Posterior cingulate gyrus (tissue), 11 donors: ENCODE measurements at regions of chr18 and their contacts with region 1.

Region 1: DNA sequence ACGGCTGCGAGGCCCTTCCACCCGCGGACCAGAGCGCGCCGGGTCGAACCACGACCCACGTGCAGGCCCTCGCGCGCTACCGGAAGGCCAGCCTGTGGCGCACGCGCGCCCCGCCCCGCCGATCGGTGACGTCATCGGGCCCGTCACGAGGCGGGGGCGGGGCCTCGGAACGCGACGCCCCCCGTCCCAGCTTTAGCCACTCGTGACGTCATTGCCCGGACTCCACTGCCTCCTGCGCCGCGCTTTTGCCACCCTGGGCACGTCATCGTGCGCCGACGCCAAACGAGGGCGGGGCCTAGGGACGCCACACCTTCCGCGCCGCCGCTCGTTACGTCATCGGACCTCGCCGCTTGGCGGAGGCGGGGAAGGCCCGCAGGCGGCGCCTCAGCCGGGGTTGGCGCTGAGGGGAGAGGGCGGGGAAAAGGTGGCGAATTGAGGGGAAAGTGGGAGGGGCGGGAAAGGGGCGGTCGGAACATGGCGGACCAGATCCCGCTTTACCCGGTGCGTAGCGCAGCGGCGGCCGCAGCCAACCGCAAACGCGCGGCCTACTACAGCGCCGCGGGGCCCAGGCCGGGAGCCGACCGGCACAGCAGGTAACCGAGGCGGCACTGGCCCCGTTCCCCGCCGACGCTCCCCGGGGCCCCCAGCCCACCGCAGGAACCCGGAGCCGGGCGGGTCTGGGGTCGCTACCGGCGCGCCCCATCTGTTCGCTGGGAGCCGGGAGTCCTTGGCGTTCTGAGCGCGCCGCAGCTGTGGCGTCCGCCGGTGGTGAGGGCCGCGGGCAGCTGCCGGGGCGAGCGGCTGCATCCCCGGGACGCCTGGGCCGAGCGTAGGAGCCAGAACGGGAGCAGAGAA is at the start of gene ATP9B:
- DNase-seq: peak; percentile 92 to 100 (median 98)

Region 2: GRCh38 chr18:79246348-79247108 is 177.4 kb after region 1 on chr18:
- intact Hi-C with region 1: loop called (anchors 5 kb)
- DNase-seq: peak; percentile 65 to 97 (median 78)